SK-N-SH (cell line): ENCODE measurements at regions of chr12 and their contacts with region 1.

Region 1: DNA sequence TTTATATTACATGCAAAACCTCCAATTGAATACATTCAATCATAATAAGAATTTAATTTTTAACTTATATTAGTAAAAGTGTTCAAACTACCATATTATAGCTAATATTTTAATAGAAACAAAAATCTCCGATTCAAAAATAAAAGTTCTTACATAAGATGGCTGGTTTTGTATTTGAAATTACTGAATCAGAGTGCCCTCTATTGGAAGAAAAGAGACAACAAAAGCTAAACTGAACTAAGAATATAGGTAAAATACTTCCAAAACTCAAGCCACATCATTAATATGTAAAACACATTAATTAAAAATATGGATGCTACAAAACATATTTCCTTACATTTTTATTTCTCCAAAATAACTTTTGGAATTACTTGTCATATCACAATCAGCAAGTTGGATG is 120.3 kb downstream of the GARIN6 start:
- DNase-seq: no peak
- H3K4me3 ChIP-seq: peak overlapping the region in 1 of 2 experiments; percentile 19; a peak in 1 of 4 replicates
- H3K27ac ChIP-seq: no peak overlapping the region
- H3K4me1 ChIP-seq: no peaks in the 10 kb centered on the region
- H3K27me3 ChIP-seq: no peaks in the 10 kb centered on the region
- CTCF ChIP-seq: peak; percentile 78
- EP300 ChIP-seq: no peak
- RAD21 ChIP-seq: peak; percentile 62

Region 2: GRCh38 chr12:99544457-99544856 is 223.4 kb before region 1 on chr12:
- CTCF ChIA-PET with region 1: no interaction called
- POLR2A ChIA-PET with region 1: no interaction called
- DNase-seq: no peak
- H3K4me3 ChIP-seq: no peak overlapping the region
- H3K27ac ChIP-seq: no peak overlapping the region
- H3K4me1 ChIP-seq: no peaks in the 10 kb centered on the region
- H3K27me3 ChIP-seq: no peaks in the 10 kb centered on the region; the same call in 1 of the 2 replicates
- CTCF ChIP-seq: no peak
- EP300 ChIP-seq: no peak
- RAD21 ChIP-seq: no peak

Region 3: DNA sequence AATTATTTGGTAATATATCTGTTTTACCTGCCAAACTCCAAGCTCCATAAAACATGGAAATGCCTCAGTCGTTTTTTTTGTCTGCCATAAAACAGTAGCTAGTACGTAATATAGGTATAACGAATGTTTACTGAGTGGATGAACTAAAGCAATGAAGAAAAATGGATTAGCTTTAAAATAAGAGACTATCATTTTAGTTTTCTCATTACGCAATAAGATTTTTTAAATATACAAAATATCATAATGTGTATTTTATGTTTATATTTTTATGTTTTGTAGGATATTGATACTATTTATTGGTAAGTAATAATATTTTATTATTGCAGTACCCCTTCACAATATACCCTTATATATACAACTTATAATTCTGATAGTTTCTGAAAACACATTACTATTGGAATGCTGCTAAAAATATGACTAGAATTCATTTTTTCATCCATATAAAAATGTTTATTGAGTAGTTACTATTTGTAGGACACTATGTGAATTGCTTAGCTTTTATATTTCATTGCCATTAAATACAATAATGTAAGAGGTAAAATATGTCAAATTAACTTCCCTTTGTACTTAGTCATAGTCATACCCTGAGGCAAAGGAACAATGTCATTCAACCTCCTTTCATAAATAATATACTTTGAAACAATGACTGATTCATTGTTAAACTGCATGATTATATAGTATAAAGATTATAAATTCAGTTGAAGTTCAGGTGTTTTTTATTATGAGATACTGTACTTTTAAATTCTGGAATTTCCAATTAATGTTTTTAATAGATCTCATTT is 15.3 kb before region 1 on chr12:
- CTCF ChIA-PET with region 1: interaction called, 16 read pairs
- POLR2A ChIA-PET with region 1: no interaction called
- DNase-seq: no peak
- H3K4me3 ChIP-seq: no peak overlapping the region
- H3K27ac ChIP-seq: no peak overlapping the region
- H3K4me1 ChIP-seq: no peaks in the 10 kb centered on the region
- H3K27me3 ChIP-seq: no peaks in the 10 kb centered on the region
- CTCF ChIP-seq: no peak
- EP300 ChIP-seq: no peak
- RAD21 ChIP-seq: no peak